Heart right ventricle (tissue), 16 donors: ENCODE measurements at regions of chr7 and their contacts with region 1.

Region 1: DNA sequence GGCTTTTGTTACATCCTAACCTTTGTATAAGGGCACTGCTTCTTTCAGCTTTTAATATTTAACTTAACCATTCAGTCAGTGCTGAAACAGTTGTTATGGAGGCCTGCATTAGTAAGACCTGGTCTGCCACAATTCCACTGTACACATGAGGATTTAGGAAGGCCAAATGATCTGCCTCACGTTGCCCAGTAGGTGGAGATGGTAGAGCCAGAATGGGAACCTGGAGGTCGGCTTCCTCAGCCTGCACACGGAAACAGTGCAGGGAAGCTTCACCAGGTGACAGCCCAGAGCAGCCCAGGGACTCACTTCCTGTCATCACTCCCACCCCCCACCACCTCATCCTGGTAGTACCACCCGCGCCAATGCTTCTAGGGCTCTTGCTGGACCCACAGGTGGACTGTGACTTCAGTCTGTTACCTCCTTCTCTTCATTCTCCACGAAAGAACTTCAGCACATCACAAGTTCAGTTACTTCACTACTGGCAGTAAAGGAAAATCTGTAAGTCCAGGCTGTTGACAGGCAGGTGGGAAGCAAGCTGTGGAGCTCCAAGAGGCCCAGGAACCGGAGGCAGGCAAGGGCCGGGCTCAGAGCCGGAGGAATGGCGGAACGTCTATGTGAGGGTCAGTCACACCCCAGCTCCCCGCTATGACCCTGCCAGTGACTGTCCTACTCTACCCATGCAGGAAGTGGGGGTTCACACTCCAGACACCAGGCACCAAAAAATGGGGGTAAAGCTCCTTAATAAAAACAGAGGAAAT is 480.3 kb upstream of the C7orf33 start:
- DNase-seq: no peak
- ATAC-seq: peak in 2 of 8 donors; percentile 29 to 75
- H3K4me3 ChIP-seq: no peak overlapping the region
- H3K27ac ChIP-seq: no peak overlapping the region
- H3K4me1 ChIP-seq: no peaks in the 10 kb centered on the region
- H3K27me3 ChIP-seq: peaks cover 0 to 28% (median 3%) of the 10 kb centered on the region in 7 donors
- CTCF ChIP-seq: peak in 6 of 9 donors; percentile 12 to 29 (median 19)

Region 2: GRCh38 chr7:147022056-147022455 is 1088.2 kb before region 1 on chr7:
- intact Hi-C with region 1: no loop called
- DNase-seq: no peak
- ATAC-seq: no peak
- H3K4me3 ChIP-seq: no peak overlapping the region
- H3K27ac ChIP-seq: no peak overlapping the region
- H3K4me1 ChIP-seq: no peaks in the 10 kb centered on the region
- H3K27me3 ChIP-seq: no peaks in the 10 kb centered on the region
- CTCF ChIP-seq: no peak

Region 3: GRCh38 chr7:147279964-147280374 is 830.3 kb before region 1 on chr7:
- intact Hi-C with region 1: loop called in 1 of 10 experiments (anchors 2 kb)
- DNase-seq: no peak
- ATAC-seq: no peak
- H3K4me3 ChIP-seq: no peak overlapping the region
- H3K27ac ChIP-seq: no peak overlapping the region
- H3K4me1 ChIP-seq: no peaks in the 10 kb centered on the region
- H3K27me3 ChIP-seq: no peaks in the 10 kb centered on the region
- CTCF ChIP-seq: no peak

Region 4: DNA sequence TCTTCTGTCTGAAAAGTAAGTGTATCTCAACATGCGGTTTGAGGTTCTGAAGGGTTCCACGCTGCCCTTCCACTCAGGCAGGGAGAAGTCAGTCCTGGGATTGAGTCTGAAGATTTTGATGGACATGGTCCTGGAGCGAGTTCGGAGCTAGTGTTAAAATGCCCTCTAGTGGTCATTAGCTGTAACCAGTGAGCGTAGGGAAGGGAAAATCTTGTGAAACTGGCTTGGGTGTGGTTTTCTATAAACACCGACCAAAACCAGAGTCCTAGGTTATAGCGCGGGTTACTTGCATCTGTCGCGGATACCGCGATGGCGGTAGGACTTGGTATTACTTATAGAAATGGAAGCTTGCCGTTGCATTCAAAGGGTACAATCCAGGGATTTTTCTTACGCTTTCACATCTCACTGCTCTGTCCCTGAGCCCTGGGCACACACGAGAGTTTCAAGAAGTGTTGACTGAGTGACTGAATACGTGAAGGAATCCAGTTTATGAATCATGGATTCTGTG is 132.1 kb after region 1 on chr7:
- intact Hi-C with region 1: loop called in 3 of 10 experiments (anchors 5 to 10 kb)
- DNase-seq: peak in 1 of 2 donors; percentile 14
- ATAC-seq: peak in 7 of 8 donors; percentile 52 to 88 (median 71)
- H3K4me3 ChIP-seq: peak overlapping the region in 2 of 10 donors; percentile 12 to 16
- H3K27ac ChIP-seq: no peak overlapping the region
- H3K4me1 ChIP-seq: peaks cover 0 to 5% (median 0%) of the 10 kb centered on the region in 9 donors
- H3K27me3 ChIP-seq: peaks cover 0 to 61% (median 19%) of the 10 kb centered on the region in 7 donors
- CTCF ChIP-seq: peak; percentile 64 to 86 (median 81)